ENCODE measurements at regions of chr6 and their contacts with region 1.

Region 1: DNA sequence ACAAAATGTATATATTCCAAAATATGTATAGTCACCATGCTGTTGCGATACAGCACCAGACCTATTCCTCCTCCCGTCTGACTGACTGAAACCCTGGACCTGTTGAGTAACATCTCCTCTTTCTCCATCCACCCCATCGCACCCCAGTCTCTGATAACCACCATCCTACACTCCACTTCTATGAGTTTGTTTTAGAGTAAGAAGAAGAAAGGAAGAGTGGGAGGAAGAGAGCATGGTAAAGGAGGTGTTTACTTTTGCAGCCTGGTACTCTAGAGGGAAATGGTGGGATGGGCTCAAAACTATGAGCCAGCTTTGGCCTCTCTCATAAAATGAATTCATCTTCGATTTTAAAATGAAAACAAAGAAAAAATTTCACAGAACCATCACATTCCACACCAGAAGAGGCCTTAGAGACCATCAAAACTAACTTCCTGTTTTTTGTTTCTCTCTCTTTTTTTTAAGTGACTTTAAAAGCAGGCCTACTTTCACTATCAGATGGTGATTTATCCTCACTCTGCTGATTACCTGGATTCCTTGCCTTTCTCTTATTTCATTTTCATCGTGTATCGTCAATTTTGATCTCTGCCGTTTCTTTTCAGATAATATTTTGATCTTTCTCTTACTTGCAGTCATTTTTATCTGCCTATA is 16.8 kb upstream of the FUCA2 start:
- DNase-seq: no peak
- H3K4me3 Mint-ChIP-seq: peak overlapping the region; percentile 51
- H3K27ac Mint-ChIP-seq: peak overlapping the region; percentile 80
- H3K4me1 Mint-ChIP-seq: peaks cover 15% of the 10 kb centered on the region
- H3K27me3 Mint-ChIP-seq: no peaks in the 10 kb centered on the region

Region 2: DNA sequence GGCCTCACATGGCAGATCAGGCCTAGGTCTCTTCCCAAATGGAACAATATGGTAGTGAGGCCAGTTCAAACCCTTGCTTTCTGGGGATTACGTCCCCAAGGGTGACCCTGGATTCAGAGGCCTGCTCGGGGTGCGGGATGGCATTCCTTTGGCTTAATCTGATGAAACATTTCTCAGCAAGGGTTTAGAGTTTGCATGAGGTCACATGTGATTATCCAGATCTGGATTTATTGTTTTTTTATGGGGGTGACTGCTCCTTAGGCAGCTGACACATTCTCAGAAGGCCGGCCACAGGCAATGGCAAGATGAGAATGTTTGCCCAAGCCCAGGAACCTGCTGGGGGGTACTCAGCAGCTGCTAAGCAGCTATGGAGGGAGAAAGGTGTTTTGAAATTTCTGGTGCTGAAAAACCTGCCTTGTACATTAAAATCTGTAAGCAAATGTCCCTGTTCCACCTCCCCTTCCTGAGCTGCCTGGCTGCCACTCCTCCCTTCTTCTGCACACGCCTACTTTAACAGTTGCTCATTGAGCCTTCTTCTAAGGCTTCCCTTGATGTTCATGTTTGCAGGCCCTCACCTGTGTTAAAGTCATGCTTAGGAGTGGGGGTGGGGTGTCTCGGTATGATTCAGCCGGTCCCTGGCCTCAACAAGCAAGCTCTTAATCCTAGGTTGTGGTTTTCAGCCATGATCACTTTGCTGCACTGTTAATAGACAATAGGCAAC is 21.1 kb after region 1 on chr6:
- intact Hi-C with region 1: loop called (anchors 1 kb)
- DNase-seq: no peak
- H3K4me3 Mint-ChIP-seq: peak overlapping the region; percentile 40
- H3K27ac Mint-ChIP-seq: peak overlapping the region; percentile 74
- H3K4me1 Mint-ChIP-seq: peaks cover 88% of the 10 kb centered on the region
- H3K27me3 Mint-ChIP-seq: no peaks in the 10 kb centered on the region

Measured in activated T-helper 1 cell treated with anti-CD3 and anti-CD28 coated beads, Interleukin-12 subunit alpha, Interleukin-12 subunit beta, Interleukin-2, Interleukin-4 antibody, amounts not matched to agents 30 ng/mL and 10 ng/mL and 1 ng/mL, durations not matched to agents 14 hours and 24 hours and 36 hours (primary cell).